Activated CD4-positive, alpha-beta memory T cell treated with anti-CD3 and anti-CD28 coated beads for 36 hours (primary cell): ENCODE measurements at regions of chr19 and their contacts with region 1.

Region 1: DNA sequence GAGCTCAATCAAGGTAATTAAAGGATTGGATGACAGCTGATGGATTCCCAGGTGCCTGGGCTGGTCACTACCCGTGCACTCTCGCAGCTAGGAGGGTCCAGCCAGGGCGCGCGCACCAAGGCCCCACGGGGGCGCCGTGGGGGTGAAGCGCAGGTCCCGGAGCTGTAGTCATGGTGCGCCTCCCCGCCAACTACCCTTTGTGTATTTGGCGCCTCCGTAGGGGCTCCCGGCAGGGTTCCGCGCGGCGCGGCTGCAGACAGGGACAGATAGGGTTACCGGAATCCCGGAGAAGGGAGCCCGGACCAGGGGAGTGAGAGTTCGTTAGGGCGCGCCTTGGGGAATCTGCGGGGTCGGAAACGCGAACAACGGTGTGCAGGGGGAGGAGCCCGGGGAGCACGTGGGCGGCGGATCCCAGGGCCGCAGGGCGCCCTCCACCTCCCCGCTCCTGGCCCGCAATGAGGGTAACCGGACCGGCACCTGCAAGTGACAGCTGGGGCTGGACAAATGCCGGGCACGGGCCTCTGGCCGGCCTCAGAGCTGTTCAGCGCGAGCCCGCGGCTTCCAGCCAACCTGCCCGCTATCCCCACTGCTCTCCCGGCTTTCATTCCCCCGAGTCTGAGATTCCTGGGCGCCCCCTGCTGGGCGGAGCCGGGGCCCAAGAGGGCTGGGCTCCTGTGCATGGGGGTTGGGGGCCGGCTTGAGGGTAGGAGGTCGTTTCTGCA is 3.4 kb upstream of the PRAM1 start:
- DNase-seq: peak; percentile 81
- H3K4me3 Mint-ChIP-seq: peak overlapping the region; percentile 79
- H3K27ac Mint-ChIP-seq: peak overlapping the region; percentile 30
- H3K4me1 Mint-ChIP-seq: peaks cover 7% of the 10 kb centered on the region
- H3K27me3 Mint-ChIP-seq: no peaks in the 10 kb centered on the region

Region 2: DNA sequence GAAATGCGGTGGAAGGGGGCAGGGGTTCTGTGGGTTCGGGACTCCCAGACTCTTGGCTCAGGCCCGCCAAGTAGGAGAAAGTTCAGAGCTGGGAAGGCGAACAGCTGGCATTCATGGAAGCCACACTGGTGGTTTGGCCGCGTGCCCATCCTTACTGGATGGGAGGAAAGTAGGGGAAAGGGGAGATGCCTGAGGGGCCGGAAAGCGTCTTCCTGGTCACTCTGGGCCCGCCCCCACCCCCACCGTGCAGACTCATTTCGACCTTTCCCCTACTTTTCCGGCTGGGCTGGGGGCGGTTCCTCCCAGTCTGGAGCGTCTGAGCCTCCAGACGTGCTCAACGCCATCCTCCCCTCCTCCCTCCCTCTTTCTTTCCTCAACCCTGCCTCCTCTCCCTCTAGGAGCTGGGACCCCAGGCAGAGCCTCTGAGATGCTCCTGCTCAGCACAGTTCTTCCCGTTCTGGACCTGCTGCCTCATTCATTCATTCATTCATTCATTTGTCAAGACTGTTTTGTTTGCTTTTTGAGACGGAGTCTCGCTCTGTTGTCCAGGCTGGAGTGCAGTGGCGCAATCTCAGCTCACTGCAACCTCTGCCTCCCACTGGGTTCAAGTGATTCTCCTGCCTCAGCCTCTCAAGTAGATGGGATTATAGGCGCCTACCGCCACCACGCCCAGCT is 138.4 kb before region 1 on chr19:
- CTCF ChIA-PET with region 1: no interaction called
- POLR2A ChIA-PET with region 1: no interaction called
- intact Hi-C with region 1: no loop called
- DNase-seq: no peak
- H3K4me3 Mint-ChIP-seq: no peak overlapping the region
- H3K27ac Mint-ChIP-seq: no peak overlapping the region
- H3K4me1 Mint-ChIP-seq: peaks cover 16% of the 10 kb centered on the region
- H3K27me3 Mint-ChIP-seq: peaks cover 36% of the 10 kb centered on the region

Region 3: GRCh38 chr19:8412783-8413628 is 92.8 kb before region 1 on chr19 and contains the start of gene MARCHF2:
- CTCF ChIA-PET with region 1: interaction called, 27 read pairs
- POLR2A ChIA-PET with region 1: interaction called, 7 read pairs
- intact Hi-C with region 1: no loop called
- DNase-seq: peak; percentile 98
- H3K4me3 Mint-ChIP-seq: peak within 1 kb of the TSS; percentile 67
- H3K27ac Mint-ChIP-seq: no peak within 1 kb of the TSS
- H3K4me1 Mint-ChIP-seq: peaks cover 11% of the 10 kb centered on the region
- H3K27me3 Mint-ChIP-seq: no peaks in the 10 kb centered on the region
- total RNA-seq, gene MARCHF2: 14.5 to 16.0 TPM

Region 4: GRCh38 chr19:8487137-8487851 is 18.5 kb before region 1 on chr19:
- CTCF ChIA-PET with region 1: interaction called, 17 read pairs
- POLR2A ChIA-PET with region 1: interaction called, 3 read pairs
- intact Hi-C with region 1: no loop called
- DNase-seq: peak; percentile 82
- H3K4me3 Mint-ChIP-seq: no peak overlapping the region
- H3K27ac Mint-ChIP-seq: peak overlapping the region; percentile 94
- H3K4me1 Mint-ChIP-seq: peaks cover 24% of the 10 kb centered on the region
- H3K27me3 Mint-ChIP-seq: no peaks in the 10 kb centered on the region

Region 5: GRCh38 chr19:8494158-8494557 is 11.7 kb before region 1 on chr19:
- CTCF ChIA-PET with region 1: interaction called, 16 read pairs
- POLR2A ChIA-PET with region 1: no interaction called
- intact Hi-C with region 1: no loop called
- DNase-seq: peak; percentile 33
- H3K4me3 Mint-ChIP-seq: no peak overlapping the region
- H3K27ac Mint-ChIP-seq: no peak overlapping the region
- H3K4me1 Mint-ChIP-seq: peaks cover 8% of the 10 kb centered on the region
- H3K27me3 Mint-ChIP-seq: no peaks in the 10 kb centered on the region